Pancreas (tissue), 10 donors: ENCODE measurements at regions of chr3 and their contacts with region 1.

Region 1: GRCh38 chr3:193465992-193466608 is 87.5 kb upstream of the ATP13A5 start:
- DNase-seq: no peak
- ATAC-seq: no peak
- H3K4me3 ChIP-seq: no peak overlapping the region
- H3K27ac ChIP-seq: no peak overlapping the region
- H3K4me1 ChIP-seq: no peaks in the 10 kb centered on the region
- H3K27me3 ChIP-seq: no peaks in the 10 kb centered on the region
- CTCF ChIP-seq: no peak

Region 2: GRCh38 chr3:193564012-193564411 is 97.9 kb after region 1 on chr3:
- intact Hi-C with region 1: loop called in 2 of 3 experiments (anchors 5 kb)
- DNase-seq: peak in 4 of 6 donors; percentile 37 to 60 (median 52)
- ATAC-seq: peak; percentile 82 to 98 (median 96)
- H3K4me3 ChIP-seq: no peak overlapping the region
- H3K27ac ChIP-seq: no peak overlapping the region
- H3K4me1 ChIP-seq: peaks cover 0 to 9% (median 6%) of the 10 kb centered on the region in 3 donors
- H3K27me3 ChIP-seq: no peaks in the 10 kb centered on the region
- CTCF ChIP-seq: peak in 3 of 4 donors; percentile 12 to 20 (median 16)

Region 3: DNA sequence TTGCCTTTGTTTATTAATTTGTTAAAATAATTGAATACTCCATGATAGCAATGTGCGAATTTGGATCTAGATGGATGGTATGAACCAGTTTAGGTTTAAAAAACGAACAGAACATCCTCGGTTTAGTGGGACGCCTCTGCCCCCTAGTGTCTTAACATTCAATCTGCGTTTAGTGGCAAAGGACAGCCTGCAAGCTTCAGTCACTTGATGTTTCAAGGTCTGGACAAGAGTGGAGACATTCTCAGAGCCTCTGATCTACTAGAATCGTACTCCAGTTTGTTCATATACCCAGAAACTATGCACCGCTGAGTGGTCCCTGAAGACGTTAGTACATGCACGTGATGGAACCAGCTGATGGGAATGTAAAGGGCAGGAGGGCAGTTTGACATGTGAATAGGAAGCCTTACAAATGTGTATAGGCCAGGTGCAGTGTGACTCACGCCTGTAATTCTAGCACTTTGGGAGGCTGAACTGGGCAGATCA is 106.4 kb after region 1 on chr3:
- intact Hi-C with region 1: loop called in 2 of 3 experiments (anchors 5 to 10 kb)
- DNase-seq: peak in 4 of 6 donors; percentile 41 to 74 (median 50)
- ATAC-seq: peak; percentile 90 to 99 (median 97)
- H3K4me3 ChIP-seq: no peak overlapping the region
- H3K27ac ChIP-seq: no peak overlapping the region
- H3K4me1 ChIP-seq: no peaks in the 10 kb centered on the region
- H3K27me3 ChIP-seq: no peaks in the 10 kb centered on the region
- CTCF ChIP-seq: peak; percentile 44 to 75 (median 54)